Activated CD4-positive, alpha-beta T cell treated with anti-CD3 and anti-CD28 coated beads for 36 hours (primary cell): ENCODE measurements at regions of chr1 and their contacts with region 1.

Region 1: GRCh38 chr1:35641233-35641866 is at the start of gene PSMB2:
- DNase-seq: peak; percentile 99
- ATAC-seq: peak; percentile 92
- H3K4me3 Mint-ChIP-seq: peak within 1 kb of the TSS; percentile 100
- H3K27ac Mint-ChIP-seq: peak within 1 kb of the TSS; percentile 100
- H3K4me1 Mint-ChIP-seq: peaks cover 26% of the 10 kb centered on the region
- H3K27me3 Mint-ChIP-seq: peaks cover 18% of the 10 kb centered on the region
- total RNA-seq, gene PSMB2: 97.1 to 125 TPM

Region 2: DNA sequence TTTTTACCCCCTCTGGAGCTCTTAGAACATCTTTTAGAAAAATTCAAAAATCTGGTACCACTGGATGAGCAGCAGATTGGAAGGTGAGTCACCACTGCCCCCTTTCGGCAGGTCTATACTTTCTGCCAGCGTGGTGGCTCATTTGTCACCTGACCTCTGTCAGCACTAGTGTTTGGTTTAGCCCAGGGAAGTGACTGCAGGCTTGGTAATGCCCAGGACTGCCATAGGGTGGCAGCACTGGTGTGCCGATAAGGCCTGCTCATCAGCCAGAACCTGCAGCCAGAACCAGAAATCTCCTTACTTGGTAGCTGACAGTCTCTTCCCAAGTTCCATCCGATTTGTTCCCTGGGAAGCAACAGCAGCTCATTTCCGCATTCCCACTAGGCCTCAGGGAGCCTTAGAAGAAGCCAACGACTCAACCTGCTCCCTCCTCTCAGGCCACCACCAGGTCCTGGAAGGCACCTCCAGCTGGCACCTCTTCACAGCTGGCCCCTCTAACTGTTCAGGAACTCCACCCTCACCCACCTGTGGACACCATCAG is 788.6 kb before region 1 on chr1:
- CTCF ChIA-PET with region 1: no interaction called
- POLR2A ChIA-PET with region 1: no interaction called
- intact Hi-C with region 1: loop called in 1 of 2 experiments (anchors 10 kb)
- DNase-seq: peak; percentile 95
- ATAC-seq: peak; percentile 100
- H3K4me3 Mint-ChIP-seq: no peak overlapping the region
- H3K27ac Mint-ChIP-seq: peak overlapping the region; percentile 34
- H3K4me1 Mint-ChIP-seq: peaks cover 17% of the 10 kb centered on the region
- H3K27me3 Mint-ChIP-seq: no peaks in the 10 kb centered on the region

Region 3: DNA sequence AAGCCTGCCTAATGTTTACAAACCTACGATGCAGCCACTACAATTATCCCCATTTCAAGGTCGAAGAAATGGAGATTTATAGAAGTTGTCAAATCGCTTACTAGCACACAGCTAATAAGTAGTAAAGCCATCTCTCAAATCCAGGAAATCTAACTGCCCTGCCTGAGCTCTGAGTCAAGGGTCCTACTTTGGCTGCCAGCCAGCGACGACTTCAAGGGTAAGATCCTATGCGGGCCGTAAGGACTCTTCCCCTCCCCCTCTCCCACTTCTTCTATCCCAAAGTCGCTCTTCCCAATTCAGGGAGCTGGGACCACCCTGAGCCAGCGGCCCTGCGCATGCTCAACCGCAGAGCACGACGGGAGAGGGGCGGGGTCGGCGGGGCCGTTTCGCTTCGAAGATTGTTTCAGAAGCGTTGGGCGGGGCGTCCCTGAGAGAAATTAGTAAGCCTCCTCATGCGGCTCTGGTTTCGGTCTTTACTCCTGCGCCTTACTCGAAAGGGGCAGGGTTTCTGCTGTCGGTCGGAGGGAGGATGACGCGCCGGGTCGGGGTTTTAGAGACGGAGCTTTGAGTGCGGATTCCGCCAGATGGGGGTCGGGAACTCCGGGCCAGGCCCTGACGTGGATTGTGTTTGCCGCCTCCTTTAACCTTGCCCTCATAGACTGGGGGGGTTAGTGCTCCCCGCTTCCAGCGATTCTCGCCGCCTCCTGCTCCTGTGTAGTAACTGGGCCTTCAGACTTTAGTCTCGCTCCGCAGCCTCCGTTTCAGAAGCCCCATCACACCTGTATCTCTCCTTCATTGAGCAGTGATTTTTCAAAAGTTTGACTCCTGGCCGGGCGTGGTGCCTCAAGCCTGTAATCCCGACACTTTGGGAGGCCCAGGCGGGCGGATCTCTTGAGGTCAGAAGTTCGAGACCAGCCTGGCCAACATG is 562.1 kb before region 1 on chr1 and contains the start of gene ZMYM1:
- CTCF ChIA-PET with region 1: no interaction called
- POLR2A ChIA-PET with region 1: no interaction called
- intact Hi-C with region 1: loop called in 1 of 2 experiments (anchors 2 kb)
- DNase-seq: peak; percentile 95
- ATAC-seq: peak; percentile 97
- H3K4me3 Mint-ChIP-seq: peak within 1 kb of the TSS; percentile 88
- H3K27ac Mint-ChIP-seq: peak within 1 kb of the TSS; percentile 97
- H3K4me1 Mint-ChIP-seq: peaks cover 36% of the 10 kb centered on the region
- H3K27me3 Mint-ChIP-seq: peaks cover 5% of the 10 kb centered on the region
- total RNA-seq, gene ZMYM1: 3.3 to 5.7 TPM

Region 4: DNA sequence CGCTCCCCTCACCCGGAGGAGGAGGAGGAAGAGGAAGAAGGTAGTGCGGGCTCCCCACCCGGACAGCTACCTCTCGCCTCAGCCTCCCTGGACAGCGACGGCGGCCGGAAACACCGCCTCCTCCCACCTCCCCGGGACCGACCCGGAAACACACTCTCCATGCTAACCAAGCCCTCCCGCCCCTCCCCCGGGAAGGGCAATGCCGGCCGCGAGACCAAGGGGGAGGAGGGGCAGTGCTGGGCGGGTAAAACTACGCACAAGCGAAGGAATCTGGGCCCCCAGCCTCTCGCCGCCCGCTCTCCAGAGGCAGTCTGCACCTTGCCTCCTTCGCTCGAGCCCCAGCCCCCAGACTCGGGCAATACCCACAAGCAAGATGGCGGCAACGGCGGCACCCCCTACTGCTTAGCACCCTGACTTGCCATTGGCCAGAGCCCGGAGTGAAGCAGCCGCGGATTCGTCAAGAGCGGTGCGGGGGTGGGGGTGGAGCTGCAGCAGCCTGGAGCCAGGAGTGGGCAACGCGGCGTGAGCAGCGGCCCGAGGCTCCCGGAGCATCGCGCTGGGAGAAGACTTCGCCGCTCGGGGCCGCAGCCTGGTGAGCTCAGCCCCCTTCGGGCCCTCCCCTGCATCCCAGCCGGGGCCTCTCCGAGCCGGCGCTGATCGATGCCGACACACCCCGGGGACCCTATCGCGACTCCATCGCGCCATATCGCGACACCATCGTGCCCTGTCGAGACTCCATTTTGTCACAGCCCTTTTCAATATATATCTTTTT is 83.9 kb before region 1 on chr1 and contains the starts of genes KIAA0319L and NCDN:
- CTCF ChIA-PET with region 1: no interaction called
- POLR2A ChIA-PET with region 1: interaction called, 3 read pairs
- intact Hi-C with region 1: loop called (anchors 1 to 5 kb)
- DNase-seq: peak; percentile 99
- ATAC-seq: peak; percentile 92
- H3K4me3 Mint-ChIP-seq: peak within 1 kb of the TSS; percentile 98
- H3K27ac Mint-ChIP-seq: peak within 1 kb of the TSS; percentile 97
- H3K4me1 Mint-ChIP-seq: peaks cover 45% of the 10 kb centered on the region
- H3K27me3 Mint-ChIP-seq: no peaks in the 10 kb centered on the region
- total RNA-seq, gene KIAA0319L: 26.5 to 28.1 TPM
- total RNA-seq, gene NCDN: 21.1 to 23.4 TPM

Region 5: DNA sequence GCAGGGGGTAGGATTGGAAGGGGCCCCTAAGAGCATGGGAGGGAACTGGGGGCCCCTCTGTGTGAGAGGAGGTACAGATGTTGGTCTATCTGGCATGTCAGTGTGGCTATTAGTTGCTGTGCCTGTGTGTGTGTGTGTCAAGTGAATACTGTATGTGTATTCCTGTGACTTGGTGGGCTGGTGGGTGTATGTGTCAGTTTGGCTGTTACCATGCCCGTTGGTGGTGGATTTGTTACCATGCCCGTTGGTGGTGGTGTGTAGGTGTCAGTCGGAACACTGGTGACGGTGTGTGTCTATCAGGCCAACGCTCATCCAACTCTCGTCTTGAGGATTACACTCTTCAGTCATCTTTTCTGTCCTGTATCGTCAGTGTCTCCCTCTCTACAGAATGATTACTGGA is 45.7 kb before region 1 on chr1:
- CTCF ChIA-PET with region 1: no interaction called
- POLR2A ChIA-PET with region 1: interaction called, 3 read pairs
- intact Hi-C with region 1: loop called in 1 of 2 experiments (anchors 5 kb)
- DNase-seq: no peak
- ATAC-seq: no peak
- H3K4me3 Mint-ChIP-seq: no peak overlapping the region
- H3K27ac Mint-ChIP-seq: no peak overlapping the region
- H3K4me1 Mint-ChIP-seq: peaks cover 12% of the 10 kb centered on the region
- H3K27me3 Mint-ChIP-seq: no peaks in the 10 kb centered on the region

Region 6: GRCh38 chr1:35747938-35748702 is 106.8 kb after region 1 on chr1:
- CTCF ChIA-PET with region 1: no interaction called
- POLR2A ChIA-PET with region 1: no interaction called
- intact Hi-C with region 1: no loop called
- DNase-seq: no peak
- ATAC-seq: no peak
- H3K4me3 Mint-ChIP-seq: no peak overlapping the region
- H3K27ac Mint-ChIP-seq: no peak overlapping the region
- H3K4me1 Mint-ChIP-seq: no peaks in the 10 kb centered on the region
- H3K27me3 Mint-ChIP-seq: no peaks in the 10 kb centered on the region

Region 7: DNA sequence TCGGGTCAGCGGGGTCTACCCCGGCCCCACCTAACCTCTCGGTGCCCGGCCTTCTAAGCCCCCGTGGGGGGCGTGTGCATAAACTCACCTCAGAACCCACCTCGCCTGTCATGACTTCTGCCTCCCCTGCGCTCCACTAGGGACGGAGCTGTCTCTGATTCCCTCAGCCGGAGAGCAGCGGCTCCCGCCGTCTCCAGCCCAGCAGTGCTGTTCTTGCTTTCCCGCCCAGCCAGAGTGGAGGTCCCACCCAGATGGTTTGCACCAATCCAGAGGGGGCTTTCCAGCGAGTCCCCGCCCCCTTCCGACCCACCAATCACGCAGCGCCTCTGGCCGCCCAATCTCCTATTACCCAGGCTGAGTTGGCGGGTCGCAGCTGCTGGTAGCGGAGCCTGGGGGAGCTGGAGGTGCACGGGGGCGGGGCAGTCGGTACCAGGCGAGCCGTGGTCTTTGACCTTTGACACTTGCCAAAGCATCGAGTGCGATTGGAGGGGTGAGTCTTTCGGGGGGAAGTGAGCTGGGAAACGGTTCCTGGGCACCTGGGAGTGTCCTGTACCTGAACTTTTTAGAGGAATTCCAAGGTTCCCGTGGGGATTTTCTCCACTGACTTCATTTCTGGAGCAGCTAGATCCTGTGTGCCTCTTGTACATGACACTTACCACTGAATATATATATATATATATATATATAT is 128.6 kb after region 1 on chr1 and contains the start of gene CLSPN:
- CTCF ChIA-PET with region 1: no interaction called
- POLR2A ChIA-PET with region 1: interaction called, 3 read pairs
- intact Hi-C with region 1: loop called (anchors 1 to 5 kb)
- DNase-seq: peak; percentile 98
- ATAC-seq: peak; percentile 98
- H3K4me3 Mint-ChIP-seq: peak within 1 kb of the TSS; percentile 91
- H3K27ac Mint-ChIP-seq: peak within 1 kb of the TSS; percentile 97
- H3K4me1 Mint-ChIP-seq: peaks cover 6% of the 10 kb centered on the region
- H3K27me3 Mint-ChIP-seq: no peaks in the 10 kb centered on the region
- total RNA-seq, gene CLSPN: 45.7 to 57.8 TPM

Region 8: DNA sequence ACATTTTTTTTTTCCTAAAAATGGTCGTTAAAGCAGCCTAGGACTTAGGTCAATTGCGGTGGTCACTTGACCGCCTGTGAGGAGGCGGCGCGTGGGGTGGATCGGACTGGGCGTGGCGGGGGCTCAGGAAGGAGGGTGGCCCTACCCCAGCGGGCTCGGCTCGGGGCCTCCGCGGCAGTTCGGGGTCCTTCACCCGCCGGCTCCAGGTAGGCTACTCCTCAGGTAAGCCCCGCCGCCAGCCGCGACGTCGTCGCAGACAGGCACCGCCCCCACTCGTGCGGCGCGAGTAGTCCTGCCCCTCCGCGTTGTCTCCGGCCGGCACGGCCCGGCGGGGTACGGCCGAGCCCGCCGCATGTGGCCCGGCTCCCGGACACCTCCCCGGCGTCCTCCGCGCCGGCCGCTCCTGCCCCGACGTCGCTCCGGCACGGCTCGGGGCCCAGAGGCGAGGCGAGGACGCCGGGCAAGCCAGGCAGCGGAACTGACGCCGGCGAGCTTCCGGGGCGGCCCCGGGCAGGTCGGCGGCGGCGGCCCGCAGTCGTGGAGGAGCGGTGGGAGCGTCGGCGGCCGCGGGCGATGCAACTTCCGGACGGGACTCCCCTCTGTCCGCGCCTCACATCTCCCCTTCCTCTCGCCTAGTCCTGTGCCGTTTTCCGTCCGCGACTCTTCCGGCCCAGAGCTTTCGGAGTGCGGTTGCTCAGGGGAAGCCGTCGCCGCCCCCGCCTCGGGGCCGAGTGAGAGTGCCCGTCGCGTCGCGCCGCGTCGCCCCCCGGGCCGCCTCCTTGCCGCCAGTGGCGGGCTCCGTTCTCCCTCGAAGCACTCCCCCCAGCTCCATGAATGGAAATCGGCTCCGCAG is 289.5 kb after region 1 on chr1 and contains the start of gene AGO3:
- CTCF ChIA-PET with region 1: no interaction called
- POLR2A ChIA-PET with region 1: no interaction called
- intact Hi-C with region 1: loop called in 1 of 2 experiments (anchors 5 kb)
- DNase-seq: peak; percentile 95
- ATAC-seq: peak; percentile 95
- H3K4me3 Mint-ChIP-seq: peak within 1 kb of the TSS; percentile 92
- H3K27ac Mint-ChIP-seq: peak within 1 kb of the TSS; percentile 94
- H3K4me1 Mint-ChIP-seq: peaks cover 37% of the 10 kb centered on the region
- H3K27me3 Mint-ChIP-seq: no peaks in the 10 kb centered on the region
- total RNA-seq, gene AGO3: 23.3 to 33.8 TPM